ENCODE measurements at regions of chr1 and their contacts with region 1.

Region 1: DNA sequence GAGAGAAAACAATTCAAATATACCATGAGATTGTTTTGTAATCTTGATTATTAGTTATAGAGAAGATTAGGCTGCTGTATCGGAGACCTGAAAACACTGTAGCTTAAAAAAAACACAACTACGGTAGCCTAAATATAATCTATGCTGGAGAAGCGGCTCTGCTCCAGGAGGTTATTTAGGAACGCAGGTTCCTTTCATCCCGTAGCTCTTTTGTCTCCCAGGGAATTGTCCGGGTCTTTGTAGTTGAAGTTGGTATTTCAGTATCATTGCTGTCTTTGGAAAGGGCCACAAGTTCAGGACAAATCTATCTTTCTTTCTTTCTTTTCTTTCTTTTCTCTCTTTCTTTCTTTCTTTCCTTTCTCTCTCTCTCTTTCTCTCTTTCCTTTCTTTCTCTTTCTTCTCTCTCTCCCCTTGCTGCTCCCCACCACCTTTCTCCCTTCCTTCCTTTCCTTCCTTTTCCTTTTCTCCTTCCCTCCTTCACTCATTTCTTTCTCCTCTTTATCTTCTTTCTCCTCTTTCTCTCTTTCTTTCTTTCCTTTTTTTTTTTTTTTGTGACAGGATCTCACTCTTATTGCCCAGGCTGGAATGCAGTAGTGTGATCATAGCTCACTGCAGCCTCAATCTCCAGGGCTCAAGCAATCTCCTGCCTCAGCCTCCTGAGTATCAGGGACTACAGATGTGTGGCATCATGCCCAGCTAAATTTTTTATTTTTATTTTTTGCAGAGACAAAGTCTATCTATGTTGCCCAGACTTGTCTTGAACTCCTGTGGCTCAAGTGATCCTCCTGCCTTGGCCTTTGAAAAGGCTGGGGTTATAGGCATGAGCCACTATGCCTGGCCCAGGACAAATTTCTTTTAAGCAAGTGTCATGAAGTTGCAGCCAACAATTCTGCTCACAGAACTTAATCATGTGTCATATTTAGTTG is 10.9 kb upstream of the NFIA start:
- DNase-seq: no peak
- H3K4me3 Mint-ChIP-seq: no peak overlapping the region
- H3K27ac Mint-ChIP-seq: peak overlapping the region; percentile 6
- H3K4me1 Mint-ChIP-seq: peaks cover 3% of the 10 kb centered on the region
- H3K27me3 Mint-ChIP-seq: no peaks in the 10 kb centered on the region
- CTCF ChIP-seq: no peak

Region 2: DNA sequence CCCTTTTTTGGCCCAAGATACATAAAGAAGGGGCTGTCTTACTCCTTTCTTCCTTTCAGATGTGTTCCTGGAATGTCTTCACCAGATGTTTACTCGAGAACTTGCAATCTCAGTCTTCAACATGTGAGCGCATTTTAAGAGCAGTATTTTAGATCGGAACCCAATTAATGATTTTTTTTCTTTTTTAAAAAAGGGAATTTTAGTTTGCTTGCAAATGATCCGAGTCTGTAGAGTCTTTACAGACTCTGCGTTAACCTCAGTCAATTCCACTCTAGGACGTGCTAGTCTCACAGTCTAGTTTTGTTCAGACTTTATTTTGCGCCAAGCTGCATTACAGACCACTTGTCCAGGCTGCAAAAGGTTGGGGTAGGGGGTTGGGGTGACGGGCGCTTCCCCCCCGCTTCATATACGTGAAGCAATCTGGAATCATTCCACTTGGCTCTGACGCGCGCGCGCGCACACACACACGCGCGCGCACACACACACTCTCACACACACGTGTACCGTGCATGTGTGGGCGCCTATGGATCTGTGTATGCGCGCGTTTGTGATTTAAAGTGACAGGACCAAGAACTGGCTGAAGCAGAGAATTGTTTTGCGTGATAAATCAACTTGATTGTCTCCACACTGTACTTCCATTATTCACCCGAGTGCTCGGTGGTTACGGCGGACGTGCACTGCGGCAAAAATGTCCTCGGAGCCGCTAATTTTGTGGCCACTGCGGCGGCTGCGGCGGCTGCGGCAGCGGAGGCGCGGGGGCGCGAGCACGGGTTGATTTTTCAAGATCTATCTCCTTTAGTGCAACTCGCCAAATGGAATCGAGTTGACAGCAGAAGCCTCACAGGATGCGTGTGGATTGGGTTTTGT is 14.7 kb before region 1 on chr1:
- CTCF ChIA-PET with region 1: interaction called, 77 read pairs
- POLR2A ChIA-PET with region 1: interaction called, 369 read pairs
- intact Hi-C with region 1: no loop called
- DNase-seq: peak; percentile 63
- H3K4me3 Mint-ChIP-seq: peak overlapping the region; percentile 86
- H3K27ac Mint-ChIP-seq: peak overlapping the region; percentile 73
- H3K4me1 Mint-ChIP-seq: peaks cover 14% of the 10 kb centered on the region
- H3K27me3 Mint-ChIP-seq: no peaks in the 10 kb centered on the region
- CTCF ChIP-seq: no peak